ENCODE measurements at regions of chr11 and their contacts with region 1.

Region 1: GRCh38 chr11:105856954-105857353 is 165.1 kb downstream of the MSANTD4 start:
- DNase-seq: no peak
- ATAC-seq: no peak
- H3K4me3 ChIP-seq: no peak overlapping the region
- H3K27ac ChIP-seq: no peak overlapping the region
- H3K4me1 ChIP-seq: no peaks in the 10 kb centered on the region
- H3K27me3 ChIP-seq: no peaks in the 10 kb centered on the region
- CTCF ChIP-seq: no peak
- POLR2A ChIP-seq: no peak
- RAD21 ChIP-seq: no peak

Region 2: DNA sequence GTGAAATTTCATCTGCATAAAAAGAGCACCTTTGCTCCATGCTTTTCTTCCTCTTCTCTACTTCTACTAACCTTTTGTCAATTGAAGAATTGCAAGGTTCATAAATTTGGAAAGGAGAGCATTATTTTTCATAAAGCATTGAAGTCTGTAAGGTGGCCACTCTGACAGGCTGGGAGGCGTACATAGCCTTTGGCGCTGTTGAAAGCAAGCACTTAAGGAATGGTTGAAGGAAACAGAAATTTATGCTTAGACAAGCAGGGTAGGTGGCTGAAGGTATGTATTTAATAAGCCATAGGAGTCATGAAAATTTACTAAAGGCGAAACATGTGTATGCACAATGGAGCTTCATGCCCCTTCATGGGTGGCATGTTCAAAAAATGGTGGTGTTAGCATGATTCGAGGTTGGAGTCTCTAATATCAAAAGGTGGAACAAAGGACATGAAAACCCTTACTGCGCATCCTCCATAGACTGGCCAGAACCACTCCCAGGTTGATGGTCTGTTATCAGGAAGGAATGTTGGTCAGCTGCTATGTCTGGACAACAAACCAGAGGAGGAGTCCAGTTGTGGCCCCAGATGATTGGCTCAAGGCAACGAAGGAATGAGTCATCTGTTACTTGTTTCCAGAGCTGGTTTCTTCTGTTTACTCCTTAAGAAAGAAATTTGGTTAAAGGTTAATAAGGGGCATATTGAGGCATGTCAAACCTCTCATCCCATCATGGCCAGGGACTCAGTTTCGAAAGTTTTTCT is 304.1 kb before region 1 on chr11:
- CTCF ChIA-PET with region 1: no interaction called
- POLR2A ChIA-PET with region 1: no interaction called
- RAD21 ChIA-PET with region 1: no interaction called
- intact Hi-C with region 1: no loop called
- DNase-seq: no peak
- ATAC-seq: no peak
- H3K4me3 ChIP-seq: no peak overlapping the region
- H3K27ac ChIP-seq: no peak overlapping the region
- H3K4me1 ChIP-seq: no peaks in the 10 kb centered on the region
- H3K27me3 ChIP-seq: no peaks in the 10 kb centered on the region
- CTCF ChIP-seq: no peak
- POLR2A ChIP-seq: no peak
- RAD21 ChIP-seq: no peak

Region 3: DNA sequence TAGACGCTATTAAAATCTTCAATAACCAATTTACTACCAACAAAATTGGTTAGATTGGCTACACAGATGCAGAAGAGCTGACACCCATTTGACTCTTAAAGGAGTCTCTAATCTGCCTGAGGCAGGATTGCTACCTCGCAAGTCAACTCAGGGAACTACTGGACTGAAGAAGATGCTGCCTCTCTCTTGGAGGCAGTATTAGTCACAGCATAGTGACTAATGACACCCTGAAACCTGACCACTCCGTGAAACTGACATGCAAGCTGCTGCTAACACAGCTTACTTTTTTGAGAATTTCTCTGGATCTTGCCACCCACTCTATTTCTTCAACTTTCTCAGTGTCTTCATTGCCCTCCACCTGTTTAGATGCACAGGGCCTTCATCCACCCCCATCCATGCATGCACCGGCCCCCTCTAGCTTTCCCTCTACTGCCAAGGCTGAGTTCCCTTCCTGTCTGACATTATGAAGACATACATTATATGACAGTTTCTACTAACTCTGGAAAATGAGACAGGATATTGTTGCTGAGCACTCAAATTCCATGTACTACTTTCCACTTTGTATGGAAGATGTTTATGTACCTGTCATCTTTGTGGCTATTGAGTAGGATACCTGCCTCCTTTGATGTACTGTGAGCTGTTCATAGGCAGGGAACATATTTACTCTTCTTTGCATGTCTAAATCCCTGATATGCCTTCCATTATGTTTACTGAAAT is 18.1 kb before region 1 on chr11:
- CTCF ChIA-PET with region 1: no interaction called
- POLR2A ChIA-PET with region 1: no interaction called
- RAD21 ChIA-PET with region 1: no interaction called
- intact Hi-C with region 1: no loop called
- DNase-seq: peak; percentile 35
- ATAC-seq: peak; percentile 78
- H3K4me3 ChIP-seq: no peak overlapping the region
- H3K27ac ChIP-seq: no peak overlapping the region
- H3K4me1 ChIP-seq: peaks cover 0 to 6% of the 10 kb centered on the region in 2 experiments; a peak in 1 of 4 replicates
- H3K27me3 ChIP-seq: no peaks in the 10 kb centered on the region
- CTCF ChIP-seq: no peak
- POLR2A ChIP-seq: no peak
- RAD21 ChIP-seq: no peak

Region 4: GRCh38 chr11:105868762-105869285 is 11.9 kb after region 1 on chr11:
- CTCF ChIA-PET with region 1: no interaction called
- POLR2A ChIA-PET with region 1: no interaction called
- RAD21 ChIA-PET with region 1: no interaction called
- intact Hi-C with region 1: loop called (anchors 1 kb)
- DNase-seq: no peak
- ATAC-seq: no peak
- H3K4me3 ChIP-seq: no peak overlapping the region
- H3K27ac ChIP-seq: no peak overlapping the region
- H3K4me1 ChIP-seq: no peaks in the 10 kb centered on the region
- H3K27me3 ChIP-seq: no peaks in the 10 kb centered on the region
- CTCF ChIP-seq: no peak
- POLR2A ChIP-seq: no peak
- RAD21 ChIP-seq: no peak

Measured in HCT116 (cell line).